Testis (tissue), 5 donors: ENCODE measurements at regions of chr14 and their contacts with region 1.

Region 1: GRCh38 chr14:39266871-39267591 is 33.3 kb downstream of the MIA2 start:
- DNase-seq: peak; percentile 89
- H3K4me3 ChIP-seq: peak overlapping the region; percentile 90 to 96
- H3K27ac ChIP-seq: peak overlapping the region; percentile 93 to 99
- H3K4me1 ChIP-seq: peaks cover 15% of the 10 kb centered on the region
- H3K27me3 ChIP-seq: no peaks in the 10 kb centered on the region
- CTCF ChIP-seq: no peak
- POLR2A ChIP-seq: peak; percentile 24

Region 2: DNA sequence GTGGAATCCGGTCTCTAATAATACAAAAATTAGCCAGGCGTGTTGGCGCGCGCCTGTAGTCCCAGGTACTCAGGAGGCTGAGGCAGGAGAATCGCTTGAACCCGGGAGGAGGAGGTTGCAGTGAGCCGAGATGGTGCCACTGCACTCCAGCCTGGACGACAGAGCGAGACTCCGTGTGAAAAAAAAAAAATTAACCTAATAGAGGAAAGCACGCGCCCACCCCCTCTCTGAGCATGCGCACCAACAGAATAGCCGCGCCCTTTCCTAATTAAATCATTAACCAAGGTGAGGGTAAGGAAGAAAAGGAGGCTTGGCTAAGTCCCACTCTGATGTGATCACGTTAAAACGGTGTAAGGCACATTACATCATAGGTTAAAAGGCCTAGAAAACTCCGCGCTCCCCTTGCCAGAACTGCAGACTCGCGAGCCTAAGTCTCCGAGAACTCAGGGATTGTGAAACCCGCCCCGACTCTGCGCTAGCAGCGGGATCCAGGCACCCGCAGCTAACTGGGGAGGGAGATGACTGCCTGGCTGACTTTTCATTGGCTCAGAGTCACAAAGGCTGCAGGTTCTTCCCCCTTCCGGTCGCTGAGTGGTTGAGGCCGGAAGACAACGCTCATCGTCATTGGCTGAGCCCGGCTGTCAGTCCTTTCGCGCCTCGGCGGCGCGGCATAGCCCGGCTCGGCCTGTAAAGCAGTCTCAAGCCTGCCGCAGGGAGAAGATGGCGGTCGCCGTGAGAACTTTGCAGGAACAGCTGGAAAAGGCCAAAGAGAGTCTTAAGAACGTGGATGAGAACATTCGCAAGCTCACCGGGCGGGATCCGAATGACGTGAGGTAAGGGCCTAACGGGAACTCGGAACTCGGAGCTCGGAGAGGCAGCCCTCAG is 92.2 kb before region 1 on chr14 and contains the start of gene PNN:
- intact Hi-C with region 1: loop called (anchors 5 kb)
- DNase-seq: peak; percentile 98
- H3K4me3 ChIP-seq: peak within 1 kb of the TSS; percentile 75 to 99
- H3K27ac ChIP-seq: peak within 1 kb of the TSS; percentile 91 to 92
- H3K4me1 ChIP-seq: peaks cover 5% of the 10 kb centered on the region
- H3K27me3 ChIP-seq: no peaks in the 10 kb centered on the region
- CTCF ChIP-seq: no peak
- POLR2A ChIP-seq: peak; percentile 58
- total RNA-seq, gene PNN: 54.1 to 78.5 TPM

Region 3: DNA sequence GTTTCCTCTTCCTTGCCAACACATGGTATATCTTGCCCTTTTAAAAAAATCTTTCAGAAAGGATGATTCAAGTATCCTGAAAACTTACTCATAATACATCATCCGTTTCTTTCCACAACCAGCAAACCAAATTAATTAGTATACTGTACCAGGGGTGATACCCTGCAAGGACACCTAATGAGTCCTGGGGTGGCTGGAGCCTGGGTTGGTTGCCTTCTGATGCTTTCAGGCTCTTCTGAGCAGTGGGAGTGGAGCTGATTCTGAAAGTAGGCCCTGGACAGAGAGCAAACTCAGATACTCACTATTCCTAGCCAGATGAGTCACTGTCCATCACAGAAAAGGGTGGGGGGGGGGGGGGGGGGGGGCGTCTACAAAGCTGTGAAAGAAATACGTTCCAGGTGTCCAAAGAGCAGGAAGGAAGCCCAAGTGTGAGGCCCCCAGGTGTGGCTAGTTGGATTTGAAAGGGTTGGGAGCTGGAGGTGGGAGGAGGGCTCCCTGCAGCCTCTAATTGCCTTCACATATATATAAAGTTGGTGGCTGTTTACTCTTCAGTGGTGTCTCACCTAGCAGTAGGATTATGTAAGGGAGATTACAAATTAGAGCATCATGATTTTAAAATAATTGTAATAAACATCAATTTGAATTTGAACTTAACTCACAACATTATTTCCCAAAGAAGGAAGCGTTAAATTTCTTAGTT is 128.7 kb after region 1 on chr14:
- intact Hi-C with region 1: no loop called
- DNase-seq: no peak
- H3K4me3 ChIP-seq: no peak overlapping the region
- H3K27ac ChIP-seq: no peak overlapping the region
- H3K4me1 ChIP-seq: no peaks in the 10 kb centered on the region
- H3K27me3 ChIP-seq: no peaks in the 10 kb centered on the region
- CTCF ChIP-seq: no peak
- POLR2A ChIP-seq: no peak